ENCODE measurements at regions of chr17 and their contacts with region 1.

Region 1: GRCh38 chr17:42120770-42121769 is at the start of gene KAT2A:
- DNase-seq: peak; percentile 82
- H3K4me3 ChIP-seq: peak within 1 kb of the TSS; percentile 62
- H3K27ac ChIP-seq: peak within 1 kb of the TSS; percentile 74
- H3K4me1 ChIP-seq: no peaks in the 10 kb centered on the region
- H3K27me3 ChIP-seq: no peaks in the 10 kb centered on the region
- CTCF ChIP-seq: no peak
- total RNA-seq, gene KAT2A: 28.6 and 30.3 TPM in 2 replicates

Region 2: DNA sequence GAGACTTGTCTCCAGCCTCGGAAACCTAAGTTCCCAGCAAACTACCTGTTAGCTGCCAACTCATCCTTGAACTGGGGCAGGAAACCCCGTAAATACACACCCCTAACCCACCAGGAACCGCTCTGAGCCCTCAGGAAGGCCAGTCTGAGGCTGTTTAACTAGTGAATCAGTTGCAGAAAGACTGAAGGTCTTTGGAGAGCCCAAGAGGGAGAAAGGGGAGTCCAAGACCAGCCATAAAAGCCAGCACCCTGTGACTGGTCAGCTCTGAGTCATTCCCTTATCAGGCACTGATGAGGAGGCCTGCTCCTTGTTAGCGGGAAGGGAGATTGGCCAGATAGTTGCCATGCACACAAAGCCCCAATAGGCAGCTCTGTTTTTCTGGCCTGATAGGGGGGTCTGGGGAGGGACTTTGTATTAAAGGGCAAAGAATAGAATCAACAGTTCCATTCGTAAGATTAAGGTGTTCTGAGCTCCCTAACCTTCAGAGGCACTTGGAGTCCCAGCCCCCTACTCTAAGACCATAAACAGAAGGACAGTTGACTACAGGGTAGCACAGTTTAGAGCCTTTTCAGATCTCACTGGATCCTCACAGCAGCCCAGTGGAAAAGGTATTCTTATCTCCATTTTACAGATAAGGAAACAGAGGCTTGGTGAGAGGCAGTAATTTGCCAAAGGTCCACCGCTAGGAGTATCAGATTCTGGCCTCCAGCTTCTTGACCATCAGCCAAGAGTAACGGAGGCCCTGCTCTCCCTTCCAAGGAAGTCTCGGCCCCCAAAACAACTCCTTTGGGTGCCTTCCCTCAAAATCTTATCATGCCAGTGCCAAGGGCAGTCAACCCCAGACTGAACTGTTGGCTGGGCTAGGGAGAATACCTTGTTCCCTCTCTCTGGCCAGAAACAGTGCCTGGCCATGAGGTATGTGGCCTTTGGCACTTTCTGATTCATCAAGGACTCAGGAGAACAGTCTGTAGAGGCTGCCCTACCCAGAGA is 590.7 kb before region 1 on chr17:
- CTCF ChIA-PET with region 1: no interaction called
- POLR2A ChIA-PET with region 1: no interaction called
- intact Hi-C with region 1: no loop called
- DNase-seq: no peak
- H3K4me3 ChIP-seq: no peak overlapping the region
- H3K27ac ChIP-seq: no peak overlapping the region
- H3K4me1 ChIP-seq: no peaks in the 10 kb centered on the region
- H3K27me3 ChIP-seq: no peaks in the 10 kb centered on the region
- CTCF ChIP-seq: no peak

Region 3: DNA sequence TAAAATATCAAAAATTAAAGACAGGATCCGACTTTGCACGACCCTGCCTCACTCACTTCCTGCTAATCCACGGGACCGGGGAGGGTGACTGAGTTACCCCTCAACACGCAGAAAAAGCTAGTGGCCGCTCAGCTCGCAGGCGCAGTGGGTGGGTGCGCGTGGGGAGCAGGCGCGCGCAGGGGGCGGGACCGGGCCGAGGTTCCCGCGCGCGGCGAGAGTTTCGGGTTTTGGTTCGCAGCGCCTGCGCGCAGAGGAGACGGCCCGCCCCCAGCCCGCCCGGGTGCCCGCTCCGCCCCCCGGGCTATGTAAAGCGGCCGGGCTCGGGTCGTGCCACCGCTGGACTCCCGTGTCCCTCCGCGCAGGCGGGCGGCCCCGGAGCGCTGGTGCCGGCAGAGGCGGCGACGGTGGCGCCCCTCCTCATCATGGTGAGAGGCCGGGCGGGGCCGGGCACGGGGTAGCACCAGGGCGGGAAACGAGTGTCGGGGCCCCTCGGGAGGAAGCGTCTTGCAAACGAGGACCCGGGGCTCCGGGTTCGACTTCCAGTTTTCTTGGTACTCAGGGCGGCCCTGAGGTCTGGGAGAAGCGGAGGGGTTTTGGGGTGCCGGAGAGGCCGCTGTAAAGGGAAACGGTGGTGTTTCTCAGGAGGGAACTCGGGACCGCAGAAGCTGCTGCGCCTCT is 154.5 kb before region 1 on chr17 and contains the start of gene CNP:
- CTCF ChIA-PET with region 1: no interaction called
- POLR2A ChIA-PET with region 1: no interaction called
- intact Hi-C with region 1: loop called (anchors 5 kb)
- DNase-seq: peak; percentile 85
- H3K4me3 ChIP-seq: peak within 1 kb of the TSS; percentile 66
- H3K27ac ChIP-seq: peak within 1 kb of the TSS; percentile 82
- H3K4me1 ChIP-seq: no peaks in the 10 kb centered on the region
- H3K27me3 ChIP-seq: no peaks in the 10 kb centered on the region
- CTCF ChIP-seq: no peak
- total RNA-seq, gene CNP: 55.5 and 55.6 TPM in 2 replicates

Region 4: DNA sequence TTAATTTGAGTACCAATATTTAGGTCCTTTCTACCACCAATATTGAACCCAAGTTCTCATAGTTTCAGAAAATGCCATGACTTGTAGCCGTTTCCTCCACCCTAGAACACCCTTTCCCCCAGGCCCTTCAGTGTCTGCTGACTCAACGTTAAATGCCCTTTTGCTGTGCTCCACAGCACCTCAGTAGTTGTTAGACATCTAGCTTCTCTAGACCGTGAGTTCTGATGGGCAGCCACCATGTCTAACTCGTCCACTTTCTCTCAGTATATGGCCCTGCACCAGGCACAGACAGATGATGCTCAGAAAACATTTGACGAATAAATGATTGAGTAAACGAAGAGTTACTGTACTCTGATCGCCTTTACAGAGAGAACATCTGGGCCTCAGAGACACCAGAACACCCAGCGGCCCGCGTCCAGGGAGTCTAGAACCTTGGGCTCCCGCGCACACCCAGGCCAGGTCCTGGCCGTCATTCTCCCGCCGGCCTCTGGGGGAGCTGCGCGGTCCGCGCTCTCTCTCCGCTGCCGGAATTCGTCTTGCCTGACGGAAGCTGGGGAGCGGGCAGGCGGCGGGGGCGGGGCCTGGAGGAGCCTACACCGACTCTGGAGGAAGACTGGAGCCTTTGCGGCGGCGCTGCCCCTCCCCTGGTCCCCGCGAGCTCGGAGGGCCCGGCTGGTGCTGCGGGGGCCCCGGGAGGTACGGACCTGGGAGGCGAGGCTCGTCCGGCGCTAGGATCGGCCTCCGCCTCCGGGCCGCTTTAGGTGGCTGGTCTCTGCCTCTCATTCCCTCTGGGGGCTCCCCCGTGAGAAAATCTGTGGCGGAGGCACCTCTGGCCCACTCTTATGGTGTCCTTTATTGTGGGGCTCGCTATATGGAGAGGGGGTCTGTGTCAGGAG is 101.3 kb before region 1 on chr17 and contains the start of gene NKIRAS2:
- CTCF ChIA-PET with region 1: interaction called, 5 read pairs
- POLR2A ChIA-PET with region 1: no interaction called
- intact Hi-C with region 1: loop called (anchors 2 kb)
- DNase-seq: peak; percentile 87
- H3K4me3 ChIP-seq: peak within 1 kb of the TSS; percentile 82
- H3K27ac ChIP-seq: peak within 1 kb of the TSS; percentile 84
- H3K4me1 ChIP-seq: no peaks in the 10 kb centered on the region
- H3K27me3 ChIP-seq: no peaks in the 10 kb centered on the region
- CTCF ChIP-seq: peak; percentile 75
- total RNA-seq, gene NKIRAS2: 25.4 and 28.7 TPM in 2 replicates

Region 5: GRCh38 chr17:42079541-42079940 is 41.5 kb before region 1 on chr17:
- CTCF ChIA-PET with region 1: interaction called, 10 read pairs
- POLR2A ChIA-PET with region 1: no interaction called
- intact Hi-C with region 1: no loop called
- DNase-seq: no peak
- H3K4me3 ChIP-seq: no peak overlapping the region
- H3K27ac ChIP-seq: no peak overlapping the region
- H3K4me1 ChIP-seq: no peaks in the 10 kb centered on the region
- H3K27me3 ChIP-seq: no peaks in the 10 kb centered on the region
- CTCF ChIP-seq: no peak

Region 6: GRCh38 chr17:42171831-42172230 is 50.8 kb after region 1 on chr17:
- CTCF ChIA-PET with region 1: no interaction called
- POLR2A ChIA-PET with region 1: no interaction called
- intact Hi-C with region 1: no loop called
- DNase-seq: no peak
- H3K4me3 ChIP-seq: no peak overlapping the region
- H3K27ac ChIP-seq: no peak overlapping the region
- H3K4me1 ChIP-seq: no peaks in the 10 kb centered on the region
- H3K27me3 ChIP-seq: no peaks in the 10 kb centered on the region
- CTCF ChIP-seq: no peak